HepG2 (cell line): ENCODE measurements at regions of chr19 and their contacts with region 1.

Region 1: GRCh38 chr19:18281082-18282020 is at the start of gene JUND:
- DNase-seq: peak; percentile 92
- ATAC-seq: peak; percentile 50
- H3K4me3 ChIP-seq: peak within 1 kb of the TSS; percentile 74 to 100 (median 84)
- H3K27ac ChIP-seq: peak within 1 kb of the TSS; percentile 99
- H3K4me1 ChIP-seq: peaks cover 64% of the 10 kb centered on the region
- H3K27me3 ChIP-seq: no peaks in the 10 kb centered on the region; a peak in 1 of 5 replicates
- CTCF ChIP-seq: no peak
- EP300 ChIP-seq: peak; percentile 43 to 80; a peak in 3 of 4 replicates
- POLR2A ChIP-seq: peak; percentile 92 to 98
- RAD21 ChIP-seq: peak; percentile 66; the same call in 1 of the 2 replicates
- total RNA-seq, gene JUND: 31.8 and 41.2 TPM in 2 replicates

Region 2: DNA sequence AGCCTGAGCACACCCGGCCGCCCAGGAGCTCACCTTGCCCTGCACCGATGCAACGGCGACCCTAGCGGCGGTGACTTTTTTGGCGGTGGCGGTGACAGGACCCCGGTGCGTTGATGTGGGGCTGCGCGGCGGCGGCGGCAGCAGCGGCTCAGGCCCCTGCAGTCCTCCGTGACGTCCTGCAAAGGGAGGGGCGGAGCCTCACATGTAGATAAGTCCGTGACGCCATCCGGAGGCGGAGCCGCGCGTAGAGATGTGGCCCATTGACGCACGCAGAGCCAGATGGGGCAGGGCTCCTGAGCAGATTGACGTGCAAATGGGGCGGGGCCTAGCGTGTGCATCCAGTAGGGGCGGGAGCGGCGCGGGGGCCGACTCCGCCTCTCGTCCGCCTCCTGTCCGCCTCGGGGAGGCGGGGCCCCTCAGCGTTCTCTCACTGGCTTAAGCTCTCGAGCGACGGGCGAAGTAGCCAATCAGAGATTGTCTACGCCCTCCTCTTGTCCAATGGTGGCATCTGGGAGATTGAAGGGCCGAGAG is 77.4 kb before region 1 on chr19 and contains the start of gene RAB3A:
- CTCF ChIA-PET with region 1: no interaction called
- POLR2A ChIA-PET with region 1: interaction called, 20 read pairs
- in situ Hi-C with region 1: no loop called
- intact Hi-C with region 1: no loop called
- DNase-seq: peak; percentile 99
- ATAC-seq: peak; percentile 94
- H3K4me3 ChIP-seq: peak within 1 kb of the TSS; percentile 73 to 94 (median 83)
- H3K27ac ChIP-seq: peak within 1 kb of the TSS; percentile 60
- H3K4me1 ChIP-seq: peaks cover 13% of the 10 kb centered on the region
- H3K27me3 ChIP-seq: 0 out of 5 replicates have a peak, but pooled peaks cover 0 to 3% of the 10 kb centered on the region in 2 experiments
- CTCF ChIP-seq: peak; percentile 36
- EP300 ChIP-seq: no peak
- POLR2A ChIP-seq: no peak; a peak in 1 of 4 replicates
- RAD21 ChIP-seq: no peak; the same call in 1 of the 2 replicates
- total RNA-seq, gene RAB3A: 0.53 and 0.58 TPM in 2 replicates

Region 3: GRCh38 chr19:18291590-18292461 is 10.5 kb after region 1 on chr19:
- CTCF ChIA-PET with region 1: no interaction called
- POLR2A ChIA-PET with region 1: interaction called, 47 read pairs
- in situ Hi-C with region 1: no loop called
- intact Hi-C with region 1: no loop called
- DNase-seq: peak; percentile 51
- ATAC-seq: peak; percentile 67
- H3K4me3 ChIP-seq: peak overlapping the region; percentile 59 to 79 (median 63)
- H3K27ac ChIP-seq: peak overlapping the region; percentile 26
- H3K4me1 ChIP-seq: peaks cover 74% of the 10 kb centered on the region
- H3K27me3 ChIP-seq: no peaks in the 10 kb centered on the region
- CTCF ChIP-seq: no peak
- EP300 ChIP-seq: peak in 1 of 2 experiments; percentile 13; a peak in 1 of 4 replicates
- POLR2A ChIP-seq: no peak
- RAD21 ChIP-seq: 0 out of 2 replicates have a peak, but pooled peaks have one; percentile 4

Region 4: GRCh38 chr19:18322759-18323460 is 41.6 kb after region 1 on chr19 and contains the start of gene LSM4:
- CTCF ChIA-PET with region 1: interaction called, 50 read pairs
- POLR2A ChIA-PET with region 1: interaction called, 278 read pairs
- in situ Hi-C with region 1: loop called (anchors 5 kb)
- intact Hi-C with region 1: loop called (anchors 1 kb)
- DNase-seq: peak; percentile 95
- ATAC-seq: peak; percentile 88
- H3K4me3 ChIP-seq: peak within 1 kb of the TSS; percentile 69 to 80 (median 72)
- H3K27ac ChIP-seq: peak within 1 kb of the TSS; percentile 84
- H3K4me1 ChIP-seq: peaks cover 73% of the 10 kb centered on the region
- H3K27me3 ChIP-seq: no peaks in the 10 kb centered on the region
- CTCF ChIP-seq: peak; percentile 59
- EP300 ChIP-seq: no peak
- POLR2A ChIP-seq: peak; percentile 66 to 69
- RAD21 ChIP-seq: peak; percentile 51
- total RNA-seq, gene LSM4: 166 and 188 TPM in 2 replicates

Region 5: DNA sequence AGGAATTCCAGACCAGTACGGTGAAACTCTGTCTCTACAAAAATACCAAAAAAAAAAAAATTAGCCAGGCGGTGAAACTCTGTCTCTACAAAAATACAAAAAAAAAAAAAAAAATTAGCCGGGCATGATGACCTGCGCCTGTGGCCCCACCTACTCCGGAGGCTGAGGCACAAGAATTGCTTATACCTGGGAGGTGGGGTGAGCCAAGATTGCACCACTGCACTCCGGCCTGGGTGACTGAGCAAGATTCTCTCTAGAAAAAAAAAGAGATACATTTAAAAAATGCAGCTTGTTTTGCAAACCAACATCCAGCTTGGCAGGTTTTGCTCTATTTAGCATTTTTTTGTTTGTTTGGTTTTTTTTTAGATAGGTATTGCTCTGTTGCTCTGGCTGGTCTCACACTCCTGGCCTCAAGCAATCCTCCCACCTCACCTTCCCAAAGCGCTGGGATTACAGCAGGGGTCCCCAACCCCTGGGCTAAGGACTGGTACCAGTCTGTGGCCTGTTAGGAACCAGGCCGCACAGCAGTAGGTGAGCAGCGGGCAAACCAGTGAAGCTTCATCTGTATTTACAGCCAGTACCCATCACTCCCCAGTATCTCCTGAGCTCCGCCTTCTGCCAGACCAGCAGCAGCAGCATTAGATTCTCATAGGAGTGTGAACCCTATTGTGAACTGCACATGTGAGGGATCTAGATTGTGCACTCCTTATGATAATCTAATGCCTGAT is 52.5 kb after region 1 on chr19:
- CTCF ChIA-PET with region 1: interaction called, 7 read pairs
- POLR2A ChIA-PET with region 1: interaction called, 110 read pairs
- in situ Hi-C with region 1: no loop called
- intact Hi-C with region 1: no loop called
- DNase-seq: no peak
- ATAC-seq: 0 out of 3 replicates have a peak, but pooled peaks have one; percentile 13
- H3K4me3 ChIP-seq: peak overlapping the region in 1 of 3 experiments; percentile 39; a peak in 1 of 6 replicates
- H3K27ac ChIP-seq: peak overlapping the region; percentile 60
- H3K4me1 ChIP-seq: peaks cover 87% of the 10 kb centered on the region
- H3K27me3 ChIP-seq: no peaks in the 10 kb centered on the region
- CTCF ChIP-seq: no peak
- EP300 ChIP-seq: no peak
- POLR2A ChIP-seq: no peak
- RAD21 ChIP-seq: no peak

Region 6: GRCh38 chr19:18364826-18365528 is 83.6 kb after region 1 on chr19:
- CTCF ChIA-PET with region 1: no interaction called
- POLR2A ChIA-PET with region 1: interaction called, 14 read pairs
- in situ Hi-C with region 1: no loop called
- intact Hi-C with region 1: no loop called
- DNase-seq: peak; percentile 97
- ATAC-seq: peak; percentile 67
- H3K4me3 ChIP-seq: no peak overlapping the region
- H3K27ac ChIP-seq: peak overlapping the region; percentile 90
- H3K4me1 ChIP-seq: peaks cover 77% of the 10 kb centered on the region
- H3K27me3 ChIP-seq: no peaks in the 10 kb centered on the region
- CTCF ChIP-seq: no peak
- EP300 ChIP-seq: peak; percentile 40 to 92; a peak in 3 of 4 replicates
- POLR2A ChIP-seq: no peak
- RAD21 ChIP-seq: no peak

Region 7: GRCh38 chr19:18419195-18419698 is 137.9 kb after region 1 on chr19 and contains the start of gene SSBP4:
- CTCF ChIA-PET with region 1: no interaction called
- POLR2A ChIA-PET with region 1: interaction called, 24 read pairs
- in situ Hi-C with region 1: loop called (anchors 10 kb)
- intact Hi-C with region 1: loop called (anchors 5 kb)
- DNase-seq: peak; percentile 66
- ATAC-seq: peak; percentile 23
- H3K4me3 ChIP-seq: peak within 1 kb of the TSS; percentile 60 to 78 (median 76); a peak in 5 of 6 replicates
- H3K27ac ChIP-seq: peak within 1 kb of the TSS; percentile 64
- H3K4me1 ChIP-seq: peaks cover 65% of the 10 kb centered on the region
- H3K27me3 ChIP-seq: no peaks in the 10 kb centered on the region
- CTCF ChIP-seq: peak; percentile 34; the same call in 1 of the 2 replicates
- EP300 ChIP-seq: peak in 1 of 2 experiments; percentile 87; a peak in 2 of 4 replicates
- POLR2A ChIP-seq: no peak
- RAD21 ChIP-seq: peak; percentile 88
- total RNA-seq, gene SSBP4: 19.3 and 39.5 TPM in 2 replicates